Heart right ventricle (tissue), 16 donors: ENCODE measurements at regions of chr10 and their contacts with region 1.

Region 1: DNA sequence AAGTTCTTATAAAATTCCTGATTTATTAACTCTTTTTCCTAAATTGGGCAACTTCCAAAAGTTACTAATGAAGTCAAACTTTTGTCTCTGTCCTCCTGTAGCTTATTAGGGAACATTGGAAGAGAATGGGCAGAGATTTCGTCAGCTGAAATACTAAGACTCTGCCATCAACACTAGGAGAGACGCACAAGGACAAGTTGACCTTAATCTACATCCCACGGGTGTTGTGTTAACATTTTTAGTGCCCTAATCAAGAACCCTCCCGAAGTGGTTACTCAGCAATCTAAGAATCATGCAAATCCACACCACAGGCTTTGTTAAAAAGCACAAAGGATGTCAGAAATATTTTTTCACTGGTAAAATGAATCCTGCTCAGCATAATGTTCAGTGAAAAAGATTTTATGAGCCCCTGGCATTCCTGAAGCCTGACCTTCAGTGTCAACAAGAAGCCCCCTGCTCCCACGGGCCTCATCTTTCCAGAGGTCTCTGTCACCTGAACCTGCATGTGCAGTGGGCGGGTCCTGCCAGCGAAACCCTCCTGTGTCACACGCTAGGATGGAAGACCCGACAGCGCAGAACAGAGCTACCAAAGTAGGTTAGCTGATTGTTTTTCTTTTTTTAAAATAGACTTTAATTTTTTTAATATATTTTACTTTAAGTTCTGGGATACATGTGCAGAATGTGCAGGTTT is 70.6 kb upstream of the AKR1E2 start:
- DNase-seq: no peak
- ATAC-seq: peak in 1 of 8 donors; percentile 29
- H3K4me3 ChIP-seq: no peak overlapping the region
- H3K27ac ChIP-seq: no peak overlapping the region
- H3K4me1 ChIP-seq: no peaks in the 10 kb centered on the region
- H3K27me3 ChIP-seq: no peaks in the 10 kb centered on the region
- CTCF ChIP-seq: no peak

Region 2: DNA sequence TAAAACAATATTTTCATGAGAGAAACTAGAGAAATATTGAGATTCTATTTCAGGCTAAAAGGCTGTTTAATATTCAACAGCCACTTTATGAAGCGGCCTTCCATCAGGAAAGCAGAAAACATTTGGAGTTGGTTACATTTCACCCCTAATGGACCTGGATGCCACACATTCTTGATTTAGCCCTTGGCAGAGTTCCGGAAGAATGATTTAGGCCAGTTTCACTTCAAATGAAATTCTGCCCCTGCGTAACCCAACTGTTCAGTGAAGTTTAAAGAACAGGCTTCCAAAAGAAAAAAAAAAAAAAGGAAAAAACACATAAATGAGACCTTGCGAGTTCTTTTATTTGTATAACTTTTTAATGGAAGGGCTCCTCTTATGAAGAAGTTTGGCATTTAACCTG is 168.7 kb before region 1 on chr10:
- intact Hi-C with region 1: no loop called
- DNase-seq: no peak
- ATAC-seq: no peak
- H3K4me3 ChIP-seq: no peak overlapping the region
- H3K27ac ChIP-seq: no peak overlapping the region
- H3K4me1 ChIP-seq: no peaks in the 10 kb centered on the region
- H3K27me3 ChIP-seq: no peaks in the 10 kb centered on the region
- CTCF ChIP-seq: no peak

Region 3: GRCh38 chr10:4678023-4678950 is 77.2 kb before region 1 on chr10:
- intact Hi-C with region 1: loop called in 3 of 10 experiments (anchors 5 to 10 kb)
- DNase-seq: no peak
- ATAC-seq: peak in 3 of 8 donors; percentile 73 to 89 (median 81)
- H3K4me3 ChIP-seq: no peak overlapping the region
- H3K27ac ChIP-seq: peak overlapping the region in 3 of 10 donors; percentile 40 to 60 (median 54)
- H3K4me1 ChIP-seq: peaks cover 0 to 21% (median 6%) of the 10 kb centered on the region in 9 donors
- H3K27me3 ChIP-seq: no peaks in the 10 kb centered on the region
- CTCF ChIP-seq: no peak

Region 4: DNA sequence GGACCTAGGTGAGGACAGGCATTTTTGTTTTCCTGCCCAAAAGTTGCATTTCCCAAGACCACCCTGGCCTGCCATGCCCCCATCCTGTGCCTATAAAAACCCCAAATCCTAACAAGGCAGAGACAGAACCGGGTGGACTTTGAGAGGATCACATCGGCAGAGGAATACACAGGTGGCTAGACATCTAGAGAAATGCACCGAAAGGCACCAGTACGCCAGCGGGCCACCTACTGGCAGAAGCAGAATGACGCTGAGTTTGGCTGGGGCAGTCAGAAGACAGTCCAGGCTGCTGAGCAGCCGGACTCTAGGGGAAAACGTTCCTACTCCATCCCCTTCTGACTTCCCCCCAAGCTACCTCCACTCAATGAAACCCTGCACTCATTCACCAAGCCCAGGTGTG is 444.0 kb after region 1 on chr10:
- intact Hi-C with region 1: no loop called
- DNase-seq: no peak
- ATAC-seq: no peak
- H3K4me3 ChIP-seq: no peak overlapping the region
- H3K27ac ChIP-seq: no peak overlapping the region
- H3K4me1 ChIP-seq: no peaks in the 10 kb centered on the region
- H3K27me3 ChIP-seq: no peaks in the 10 kb centered on the region
- CTCF ChIP-seq: no peak